ENCODE measurements at regions of chr2 and their contacts with region 1.

Region 1: GRCh38 chr2:241217320-241218031 is 29.0 kb downstream of the ANO7 start:
- DNase-seq: peak; percentile 66
- H3K4me3 ChIP-seq: no peak overlapping the region
- H3K27ac ChIP-seq: no peak overlapping the region
- H3K4me1 ChIP-seq: peaks cover 11% of the 10 kb centered on the region
- CTCF ChIP-seq: no peak

Region 2: DNA sequence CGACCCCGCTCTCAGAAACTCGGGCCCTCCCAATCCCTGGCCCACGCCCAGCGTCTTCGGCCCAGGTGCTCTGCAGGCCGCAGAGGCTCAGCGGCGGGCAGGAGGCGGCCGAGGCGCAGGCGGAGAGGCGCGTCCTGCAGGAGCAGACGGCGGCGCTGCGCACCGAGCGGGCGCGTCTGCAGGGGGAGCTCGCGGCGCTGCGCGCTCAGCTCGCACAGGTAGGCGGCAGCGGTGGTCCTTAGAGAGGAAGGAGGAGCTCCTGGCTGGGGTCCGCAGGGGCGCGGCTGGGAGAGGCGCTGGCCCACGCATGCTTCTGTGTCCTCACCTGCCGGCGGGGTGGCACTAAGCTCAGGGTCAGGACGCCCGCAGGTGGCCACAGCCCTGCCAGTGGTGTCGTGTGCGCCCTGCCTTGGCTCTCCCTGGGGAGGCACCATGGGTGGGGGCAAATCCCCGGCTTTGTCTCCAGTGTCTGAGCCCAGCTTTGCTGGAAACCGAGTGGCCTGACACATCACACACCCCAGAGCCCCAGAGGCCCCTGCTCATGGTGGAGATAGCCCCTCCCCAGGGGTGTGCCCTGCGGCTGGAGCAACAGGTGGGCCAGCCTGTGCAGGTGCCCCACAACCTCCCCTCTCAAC is 234.0 kb before region 1 on chr2:
- CTCF ChIA-PET with region 1: no interaction called
- POLR2A ChIA-PET with region 1: no interaction called
- intact Hi-C with region 1: loop called (anchors 2 kb)
- DNase-seq: peak; percentile 74
- H3K4me3 ChIP-seq: no peak overlapping the region
- H3K27ac ChIP-seq: no peak overlapping the region
- H3K4me1 ChIP-seq: peaks cover 13% of the 10 kb centered on the region
- CTCF ChIP-seq: peak; percentile 80